ENCODE measurements at regions of chr1 and their contacts with region 1.

Region 1: GRCh38 chr1:157496121-157496526 is 56.2 kb downstream of the FCRL5 start:
- DNase-seq: no peak
- ATAC-seq: peak in 2 of 4 donors; percentile 49 to 70
- H3K4me3 ChIP-seq: no peak overlapping the region
- H3K27ac ChIP-seq: no peak overlapping the region
- H3K4me1 ChIP-seq: no peaks in the 10 kb centered on the region
- H3K27me3 ChIP-seq: peaks cover 0 to 27% (median 3%) of the 10 kb centered on the region in 9 donors
- CTCF ChIP-seq: peak; percentile 74 to 93 (median 85)
- POLR2A ChIP-seq: no peak

Region 2: GRCh38 chr1:157307491-157307890 is 188.6 kb before region 1 on chr1:
- intact Hi-C with region 1: loop called in 1 of 10 experiments (anchors 5 kb)
- DNase-seq: no peak
- ATAC-seq: no peak
- H3K4me3 ChIP-seq: no peak overlapping the region
- H3K27ac ChIP-seq: no peak overlapping the region
- H3K4me1 ChIP-seq: no peaks in the 10 kb centered on the region
- H3K27me3 ChIP-seq: peaks cover 0 to 14% (median 3%) of the 10 kb centered on the region in 9 donors
- CTCF ChIP-seq: no peak
- POLR2A ChIP-seq: no peak